Activated CD4-positive, alpha-beta T cell treated with anti-CD3 and anti-CD28 coated beads, Interleukin-2, amount 10 ng/mL, durations not matched to agents 7 days and 5 days (primary cell): ENCODE measurements at regions of chr22 and their contacts with region 1.

Region 1: DNA sequence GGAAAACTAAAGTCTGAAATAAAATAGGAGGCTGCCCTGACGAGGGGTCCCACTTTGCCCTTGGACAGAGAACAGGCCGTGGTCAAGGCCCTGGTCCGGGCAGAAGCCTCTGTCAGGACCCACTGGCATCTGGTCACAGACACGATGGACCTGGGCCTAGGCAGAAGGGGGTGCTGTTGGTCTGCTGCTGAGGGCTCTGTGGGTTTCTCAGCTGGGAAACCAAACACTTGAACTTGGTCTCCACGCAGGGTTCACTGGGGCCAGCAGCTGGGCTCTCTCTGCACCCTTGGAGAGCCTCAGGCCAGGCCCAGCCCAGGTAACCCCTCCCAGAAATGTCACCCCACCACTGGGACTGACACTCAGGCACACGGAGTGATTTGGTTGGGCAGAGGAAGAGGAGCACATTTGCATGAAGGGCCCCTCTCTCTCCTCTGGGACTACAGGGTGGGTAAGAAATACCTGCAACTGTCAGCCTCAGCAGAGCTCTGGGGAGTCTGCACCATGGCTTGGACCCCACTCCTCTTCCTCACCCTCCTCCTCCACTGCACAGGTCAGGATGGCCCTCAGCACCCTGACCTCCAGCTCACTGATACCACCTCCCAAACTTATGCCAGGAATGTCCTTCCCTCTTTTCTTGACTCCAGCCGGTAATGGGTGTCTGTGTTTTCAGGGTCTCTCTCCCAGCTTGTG is 48.1 kb upstream of the TOP3B start:
- DNase-seq: no peak
- H3K4me3 Mint-ChIP-seq: no peak overlapping the region
- H3K27ac Mint-ChIP-seq: no peak overlapping the region
- H3K4me1 Mint-ChIP-seq: no peaks in the 10 kb centered on the region
- H3K27me3 Mint-ChIP-seq: peaks cover 9% of the 10 kb centered on the region

Region 2: GRCh38 chr22:20648306-20648903 is 1382.2 kb before region 1 on chr22:
- CTCF ChIA-PET with region 1: no interaction called
- POLR2A ChIA-PET with region 1: interaction called, 10 read pairs
- DNase-seq: no peak
- H3K4me3 Mint-ChIP-seq: no peak overlapping the region
- H3K27ac Mint-ChIP-seq: no peak overlapping the region
- H3K4me1 Mint-ChIP-seq: no peaks in the 10 kb centered on the region
- H3K27me3 Mint-ChIP-seq: peaks cover 2% of the 10 kb centered on the region

Region 3: GRCh38 chr22:22019659-22020424 is 10.8 kb before region 1 on chr22:
- CTCF ChIA-PET with region 1: no interaction called
- POLR2A ChIA-PET with region 1: no interaction called
- DNase-seq: no peak
- H3K4me3 Mint-ChIP-seq: no peak overlapping the region
- H3K27ac Mint-ChIP-seq: no peak overlapping the region
- H3K4me1 Mint-ChIP-seq: peaks cover 2% of the 10 kb centered on the region
- H3K27me3 Mint-ChIP-seq: peaks cover 17% of the 10 kb centered on the region